A549 (cell line): ENCODE measurements at regions of chr22 and their contacts with region 1.

Region 1: GRCh38 chr22:37260901-37261336 is 16.9 kb upstream of the RAC2 start:
- DNase-seq: peak; percentile 53 to 58
- ATAC-seq: peak; percentile 78 to 81; a peak in 5 of 6 replicates
- H3K4me3 ChIP-seq: no peak overlapping the region
- H3K27ac ChIP-seq: no peak overlapping the region
- H3K4me1 ChIP-seq: peaks cover 19% of the 10 kb centered on the region
- CTCF ChIP-seq: peak; percentile 61
- EP300 ChIP-seq: no peak
- POLR2A ChIP-seq: no peak
- RAD21 ChIP-seq: peak; percentile 47

Region 2: DNA sequence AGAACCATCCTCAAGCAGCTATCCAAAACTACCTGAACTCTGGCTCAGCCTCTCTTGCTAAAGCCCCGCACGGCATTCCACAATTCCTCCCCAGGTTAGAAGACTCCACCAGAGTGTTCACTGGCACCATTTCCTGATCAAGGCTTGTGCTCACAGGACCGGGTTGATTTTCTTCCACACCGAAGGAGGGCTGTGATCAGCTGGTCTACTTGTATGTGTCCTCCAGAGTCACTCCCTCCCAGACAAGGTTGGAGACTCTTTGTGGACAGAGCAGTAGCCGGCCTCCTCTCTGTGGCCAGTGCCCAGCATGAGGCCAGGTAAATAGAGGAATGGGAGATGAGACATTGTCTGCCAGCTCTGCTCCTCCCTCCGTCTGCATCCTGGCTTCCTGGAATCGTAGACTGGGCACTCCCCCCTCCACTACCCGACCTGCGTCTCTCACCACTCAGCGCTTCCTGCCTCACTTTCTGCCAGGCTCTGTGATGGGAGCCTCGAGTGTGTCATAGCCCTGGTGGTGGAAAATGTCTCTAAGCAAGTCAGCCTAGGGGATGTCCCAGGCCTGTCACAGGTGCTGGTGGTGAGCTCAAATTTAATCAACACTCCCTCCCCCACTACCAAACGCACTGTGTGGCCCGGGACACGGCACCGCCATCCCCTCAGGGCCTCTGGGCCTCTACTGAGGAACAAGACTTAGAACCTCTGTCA is 138.9 kb before region 1 on chr22:
- CTCF ChIA-PET with region 1: no interaction called
- POLR2A ChIA-PET with region 1: no interaction called
- DNase-seq: peak in 1 of 2 experiments; percentile 36
- ATAC-seq: peak; percentile 12 to 62; a peak in 3 of 6 replicates
- H3K4me3 ChIP-seq: no peak overlapping the region
- H3K27ac ChIP-seq: peak overlapping the region in 1 of 2 experiments; percentile 48; a peak in 3 of 6 replicates
- H3K4me1 ChIP-seq: peaks cover 15% of the 10 kb centered on the region; the same call in 2 of the 3 replicates
- CTCF ChIP-seq: no peak
- EP300 ChIP-seq: no peak
- POLR2A ChIP-seq: no peak
- RAD21 ChIP-seq: no peak

Region 3: GRCh38 chr22:37166675-37167066 is 94.2 kb before region 1 on chr22:
- CTCF ChIA-PET with region 1: interaction called, 10 read pairs
- POLR2A ChIA-PET with region 1: no interaction called
- DNase-seq: peak; percentile 84 to 91
- ATAC-seq: peak; percentile 94 to 99
- H3K4me3 ChIP-seq: 0 out of 3 replicates have a peak overlapping the region, but pooled peaks have one; percentile 4
- H3K27ac ChIP-seq: peak overlapping the region; percentile 87
- H3K4me1 ChIP-seq: peaks cover 42% of the 10 kb centered on the region
- CTCF ChIP-seq: peak; percentile 80
- EP300 ChIP-seq: no peak
- POLR2A ChIP-seq: no peak; the same call in 1 of the 2 replicates
- RAD21 ChIP-seq: peak; percentile 77 to 85

Region 4: DNA sequence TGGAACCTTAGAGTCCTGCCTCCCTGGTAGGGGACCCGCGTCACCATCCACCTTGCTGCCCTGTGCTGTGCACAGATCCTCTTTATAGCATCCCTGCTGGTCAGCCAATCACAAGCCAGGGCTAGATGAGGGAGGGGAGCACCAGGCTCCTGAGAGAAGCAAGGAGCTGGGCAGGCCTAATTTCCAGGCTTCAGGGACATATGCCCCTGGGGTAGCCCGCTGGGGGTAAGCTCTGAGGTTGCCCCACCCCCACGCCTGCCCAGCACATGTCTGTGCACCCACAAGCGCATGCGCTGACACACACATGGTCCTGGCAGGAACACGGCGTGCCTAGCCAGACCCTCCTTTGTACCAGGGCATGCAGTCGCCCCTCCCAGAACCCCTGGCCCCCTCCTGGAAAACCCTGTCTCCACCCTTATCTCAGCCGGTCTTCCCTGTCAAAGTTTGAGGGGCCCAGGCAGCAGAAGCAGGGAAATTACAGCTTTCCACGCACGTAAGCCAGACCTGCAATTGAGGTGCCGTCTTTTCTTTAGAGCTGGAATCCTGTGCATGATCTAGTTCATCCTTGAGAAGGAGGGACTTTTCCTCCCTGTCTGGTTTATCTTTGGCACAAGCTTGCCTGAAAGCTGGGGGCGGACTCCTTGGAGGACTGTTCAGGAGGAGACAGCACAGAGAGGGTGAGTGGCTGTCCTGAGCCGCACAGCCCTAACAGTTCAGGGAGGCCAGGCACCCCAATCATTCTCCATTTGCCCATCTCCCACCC is 50.7 kb before region 1 on chr22:
- CTCF ChIA-PET with region 1: interaction called, 13 read pairs
- POLR2A ChIA-PET with region 1: no interaction called
- DNase-seq: no peak
- ATAC-seq: no peak
- H3K4me3 ChIP-seq: no peak overlapping the region
- H3K27ac ChIP-seq: no peak overlapping the region
- H3K4me1 ChIP-seq: no peaks in the 10 kb centered on the region
- CTCF ChIP-seq: no peak
- EP300 ChIP-seq: no peak
- POLR2A ChIP-seq: no peak
- RAD21 ChIP-seq: no peak

Region 5: DNA sequence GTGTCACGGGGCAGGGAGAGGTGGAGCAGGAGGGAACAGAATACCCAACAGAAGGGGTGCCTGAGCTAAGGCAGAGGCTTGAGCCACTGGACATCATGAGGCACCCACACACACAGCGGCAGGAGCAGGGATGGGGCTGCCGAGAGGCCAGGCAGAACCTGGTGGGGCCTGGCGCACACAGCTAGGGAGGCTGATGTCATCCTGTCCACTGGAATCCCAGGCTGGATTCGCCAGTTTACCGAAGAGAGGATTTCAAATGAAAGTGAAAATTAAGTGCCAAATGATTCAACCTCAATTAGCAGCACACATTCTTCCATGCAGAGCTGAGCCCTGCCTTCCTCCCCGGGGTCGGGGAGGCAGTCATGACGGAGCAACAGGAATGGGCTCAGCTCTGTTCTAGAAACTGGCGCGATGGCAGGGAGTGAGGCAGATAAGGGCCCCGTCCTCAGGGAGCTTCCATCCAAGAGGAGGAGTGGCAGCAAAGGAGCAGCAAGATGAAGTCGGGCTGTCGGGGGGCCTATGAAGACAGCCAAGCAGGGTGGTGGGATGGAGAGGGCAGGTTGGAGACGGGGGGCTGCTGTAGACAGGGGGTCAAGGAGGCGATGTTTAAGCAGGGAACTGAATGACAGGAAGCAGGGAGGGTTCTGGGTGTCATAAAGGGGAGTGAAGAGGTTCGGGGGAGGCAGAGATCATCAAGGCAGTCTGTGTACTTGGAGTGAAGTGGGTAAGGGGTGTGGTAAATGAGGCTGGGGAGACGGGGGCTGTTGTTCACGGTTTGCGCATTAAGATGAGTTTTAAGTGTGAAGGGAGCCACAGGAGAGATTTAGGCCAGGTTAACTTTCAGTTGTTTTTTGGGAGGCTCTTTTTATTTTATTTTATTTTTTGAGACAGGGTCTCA is 23.3 kb before region 1 on chr22:
- CTCF ChIA-PET with region 1: interaction called, 42 read pairs
- POLR2A ChIA-PET with region 1: no interaction called
- DNase-seq: no peak
- ATAC-seq: no peak
- H3K4me3 ChIP-seq: no peak overlapping the region
- H3K27ac ChIP-seq: no peak overlapping the region
- H3K4me1 ChIP-seq: peaks cover 2% of the 10 kb centered on the region; the same call in 1 of the 3 replicates
- CTCF ChIP-seq: no peak
- EP300 ChIP-seq: no peak
- POLR2A ChIP-seq: no peak
- RAD21 ChIP-seq: no peak

Region 6: DNA sequence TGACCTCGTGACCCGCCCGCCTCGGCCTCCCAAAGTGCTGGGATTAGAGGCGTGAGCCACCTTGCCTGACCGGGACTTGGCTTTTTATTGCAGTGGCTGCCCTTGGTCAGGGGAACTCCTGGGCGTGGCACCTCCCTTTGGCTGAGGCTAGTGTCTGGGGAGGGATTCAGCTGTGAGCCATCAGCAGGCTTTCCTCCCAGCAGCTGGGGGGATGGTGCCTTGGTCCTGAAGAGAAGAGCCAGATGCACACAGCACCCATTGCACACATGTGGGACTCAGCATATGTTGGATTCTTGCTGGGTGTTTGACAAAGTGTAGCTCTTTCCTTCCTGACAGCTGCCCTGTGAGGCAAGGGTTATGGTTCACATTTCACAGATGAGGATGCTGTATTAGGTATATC is 29.8 kb after region 1 on chr22:
- CTCF ChIA-PET with region 1: interaction called, 13 read pairs
- POLR2A ChIA-PET with region 1: no interaction called
- DNase-seq: no peak
- ATAC-seq: no peak
- H3K4me3 ChIP-seq: no peak overlapping the region
- H3K27ac ChIP-seq: no peak overlapping the region
- H3K4me1 ChIP-seq: no peaks in the 10 kb centered on the region
- CTCF ChIP-seq: no peak
- EP300 ChIP-seq: no peak
- POLR2A ChIP-seq: no peak
- RAD21 ChIP-seq: no peak

Region 7: GRCh38 chr22:37309211-37310074 is 48.5 kb after region 1 on chr22:
- CTCF ChIA-PET with region 1: interaction called, 27 read pairs
- POLR2A ChIA-PET with region 1: no interaction called
- DNase-seq: no peak
- ATAC-seq: no peak
- H3K4me3 ChIP-seq: no peak overlapping the region
- H3K27ac ChIP-seq: peak overlapping the region; percentile 50 to 76; a peak in 5 of 6 replicates
- H3K4me1 ChIP-seq: peaks cover 58% of the 10 kb centered on the region
- CTCF ChIP-seq: no peak
- EP300 ChIP-seq: no peak
- POLR2A ChIP-seq: no peak
- RAD21 ChIP-seq: no peak

Region 8: DNA sequence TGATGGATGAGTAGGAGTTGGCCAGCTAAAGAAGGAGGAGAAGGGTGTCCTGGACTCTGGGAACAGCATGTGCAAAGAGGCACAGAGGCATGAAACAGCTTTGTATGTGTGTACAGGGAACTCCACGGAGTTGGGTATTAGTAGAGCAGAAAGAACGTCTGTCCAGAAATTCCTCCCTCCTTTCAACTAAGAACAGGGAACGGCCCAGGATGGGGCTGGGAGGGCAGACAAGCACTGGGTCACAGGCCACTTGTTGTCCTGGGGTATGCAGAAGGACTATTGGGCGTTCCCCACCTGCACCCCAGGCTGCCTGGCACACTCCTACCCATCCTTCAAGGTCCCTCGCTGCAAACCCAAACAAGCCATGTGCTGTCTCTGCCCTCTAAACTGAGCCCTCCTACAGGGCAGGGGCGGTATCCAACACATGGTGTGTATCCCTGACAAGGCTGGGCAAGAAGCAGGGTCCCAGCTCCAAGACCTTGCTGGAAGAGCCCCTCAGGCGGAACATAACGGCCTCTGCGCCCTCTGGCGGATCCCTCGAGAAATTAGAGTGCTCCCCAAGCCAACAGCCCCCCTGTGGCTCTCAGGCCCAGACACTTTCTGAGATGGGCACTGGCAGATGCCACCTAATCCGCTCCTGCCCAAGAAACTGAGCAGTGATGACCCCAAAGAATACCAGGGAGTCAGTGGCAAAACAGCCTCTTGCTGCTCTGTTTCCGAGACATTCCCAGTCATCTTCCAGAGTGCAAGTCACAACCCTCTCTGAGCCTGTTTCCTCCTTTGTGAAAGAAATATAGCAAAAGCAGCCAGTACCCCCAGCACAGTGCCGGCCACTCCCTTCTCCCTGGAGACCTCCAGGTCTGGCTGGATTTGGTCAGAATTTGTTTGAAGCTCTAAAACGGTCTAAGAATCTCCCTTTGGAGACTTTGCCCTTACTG is 168.0 kb after region 1 on chr22:
- CTCF ChIA-PET with region 1: interaction called, 13 read pairs
- POLR2A ChIA-PET with region 1: no interaction called
- DNase-seq: peak; percentile 53 to 64
- ATAC-seq: peak; percentile 28 to 74; a peak in 3 of 6 replicates
- H3K4me3 ChIP-seq: no peak overlapping the region
- H3K27ac ChIP-seq: peak overlapping the region; percentile 64 to 97
- H3K4me1 ChIP-seq: peaks cover 64% of the 10 kb centered on the region
- CTCF ChIP-seq: peak; percentile 74
- EP300 ChIP-seq: no peak
- POLR2A ChIP-seq: no peak
- RAD21 ChIP-seq: peak; percentile 60 to 64